ENCODE measurements at regions of chr3 and their contacts with region 1.

Region 1: DNA sequence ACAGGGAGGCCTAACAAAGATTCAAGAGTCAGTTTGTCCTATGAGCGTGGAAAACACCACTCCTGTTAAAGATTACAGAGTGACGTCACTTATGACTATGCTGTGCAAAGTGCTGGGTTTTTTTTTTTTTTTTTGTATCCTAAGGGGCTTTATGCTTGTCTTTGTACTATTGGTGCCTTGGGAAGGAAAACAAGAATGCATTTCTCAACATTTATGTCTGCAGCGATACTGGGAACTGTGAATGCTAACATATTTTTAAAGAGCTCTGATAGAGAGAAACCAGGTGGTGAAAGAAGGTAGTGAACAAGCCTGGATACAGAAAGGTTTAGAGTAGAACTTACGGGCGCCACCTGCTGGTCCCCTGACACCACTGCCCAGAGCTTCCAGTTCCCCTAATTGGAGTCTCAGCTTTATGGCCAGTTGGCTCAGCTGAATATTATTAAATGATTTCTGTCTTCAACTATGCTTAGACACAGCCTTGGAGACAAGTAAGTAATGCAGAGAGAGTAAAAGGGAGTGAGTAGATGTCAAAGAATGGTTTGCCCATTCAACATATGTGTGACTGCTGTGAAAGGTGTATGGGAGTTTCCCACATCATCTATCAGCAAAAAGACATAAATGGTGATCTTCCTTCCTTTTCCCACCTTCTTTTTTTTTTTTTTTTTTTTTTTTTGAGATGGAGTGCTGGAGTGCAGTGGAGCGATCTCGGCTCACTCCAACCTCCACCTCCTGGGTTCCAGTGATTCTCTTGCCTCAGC is 807.9 kb upstream of the CFAP20DC start:
- DNase-seq: peak; percentile 65 to 86
- ATAC-seq: peak; percentile 83 to 99 (median 96)
- H3K4me3 ChIP-seq: no peak overlapping the region
- H3K4me3 Mint-ChIP-seq: peak overlapping the region; percentile 61
- H3K27ac ChIP-seq: no peak overlapping the region
- H3K27ac Mint-ChIP-seq: no peak overlapping the region
- H3K4me1 ChIP-seq: no peaks in the 10 kb centered on the region
- H3K4me1 Mint-ChIP-seq: peaks cover 5 to 10% of the 10 kb centered on the region in 2 donors
- H3K27me3 ChIP-seq: no peaks in the 10 kb centered on the region
- H3K27me3 Mint-ChIP-seq: no peaks in the 10 kb centered on the region
- CTCF ChIP-seq: peak; percentile 90

Region 2: GRCh38 chr3:59313365-59313764 is 544.4 kb before region 1 on chr3:
- intact Hi-C with region 1: loop called (anchors 2 kb)
- DNase-seq: peak; percentile 21 to 50
- ATAC-seq: peak in 1 of 3 donors; percentile 60
- H3K4me3 ChIP-seq: no peak overlapping the region
- H3K4me3 Mint-ChIP-seq: no peak overlapping the region
- H3K27ac ChIP-seq: no peak overlapping the region
- H3K27ac Mint-ChIP-seq: no peak overlapping the region
- H3K4me1 ChIP-seq: no peaks in the 10 kb centered on the region
- H3K4me1 Mint-ChIP-seq: no peaks in the 10 kb centered on the region
- H3K27me3 ChIP-seq: no peaks in the 10 kb centered on the region
- H3K27me3 Mint-ChIP-seq: peaks cover 4 to 8% of the 10 kb centered on the region in 2 donors
- CTCF ChIP-seq: peak; percentile 26

Measured in natural killer cell (primary cell).